ENCODE measurements at regions of chr1 and their contacts with region 1.

Region 1: DNA sequence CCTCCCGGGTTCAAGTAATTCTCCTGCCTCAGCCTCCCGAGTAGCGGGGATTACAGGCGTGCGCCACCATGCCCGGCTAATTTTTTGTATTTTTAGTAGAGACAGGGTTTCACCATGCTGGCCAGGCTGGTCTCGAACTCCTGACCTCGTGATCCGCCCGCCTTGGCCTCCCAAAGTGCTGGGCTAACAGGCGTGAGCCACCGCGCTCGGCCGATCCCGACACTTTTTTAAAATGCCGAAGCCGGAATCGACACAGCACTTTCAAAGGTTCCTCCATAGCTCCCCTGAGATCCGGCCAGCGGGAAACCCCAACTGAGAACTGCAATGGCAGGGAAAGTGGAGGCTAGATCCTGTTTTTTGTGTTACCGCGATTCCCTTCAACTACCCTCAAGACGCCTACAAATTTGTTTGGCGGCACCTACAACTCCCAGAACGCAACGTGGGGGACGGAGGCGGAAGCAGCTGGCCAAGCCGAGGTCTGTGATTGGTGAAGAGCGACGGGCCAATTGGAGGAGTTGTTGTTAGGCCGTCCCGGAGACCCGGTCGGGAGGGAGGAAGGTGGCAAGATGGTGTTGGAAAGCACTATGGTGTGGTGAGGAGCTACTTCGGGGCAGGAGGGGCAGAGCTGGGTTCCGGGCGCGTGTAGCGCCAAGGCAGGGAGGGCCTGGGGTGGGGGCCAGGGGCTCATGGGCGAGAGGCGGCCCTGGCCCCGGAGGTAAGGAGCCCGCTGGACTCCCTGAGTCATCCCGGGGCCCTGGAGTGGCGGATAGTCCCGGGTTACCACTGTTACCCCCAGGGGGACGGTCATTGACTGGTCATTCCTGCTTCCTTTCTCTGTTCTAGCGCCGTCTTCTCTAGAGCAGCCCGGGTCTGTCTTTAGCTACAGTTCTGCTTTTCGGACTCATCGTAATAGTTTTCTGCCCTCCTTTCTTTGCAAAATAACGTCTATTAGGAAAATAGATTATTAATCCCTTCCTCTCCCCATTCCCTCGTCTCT is at the start of gene PSMD4:
- DNase-seq: peak; percentile 81
- H3K4me3 ChIP-seq: peak within 1 kb of the TSS; percentile 80
- CTCF ChIP-seq: peak; percentile 7

Region 2: GRCh38 chr1:151196292-151196800 is 58.2 kb before region 1 on chr1:
- CTCF ChIA-PET with region 1: interaction called, 45 read pairs
- POLR2A ChIA-PET with region 1: no interaction called
- DNase-seq: no peak
- H3K4me3 ChIP-seq: peak overlapping the region; percentile 23; the same call in 1 of the 2 replicates
- CTCF ChIP-seq: peak; percentile 44

Region 3: GRCh38 chr1:151210830-151211229 is 43.7 kb before region 1 on chr1:
- CTCF ChIA-PET with region 1: interaction called, 16 read pairs
- POLR2A ChIA-PET with region 1: no interaction called
- DNase-seq: no peak
- H3K4me3 ChIP-seq: no peak overlapping the region
- CTCF ChIP-seq: no peak

Region 4: DNA sequence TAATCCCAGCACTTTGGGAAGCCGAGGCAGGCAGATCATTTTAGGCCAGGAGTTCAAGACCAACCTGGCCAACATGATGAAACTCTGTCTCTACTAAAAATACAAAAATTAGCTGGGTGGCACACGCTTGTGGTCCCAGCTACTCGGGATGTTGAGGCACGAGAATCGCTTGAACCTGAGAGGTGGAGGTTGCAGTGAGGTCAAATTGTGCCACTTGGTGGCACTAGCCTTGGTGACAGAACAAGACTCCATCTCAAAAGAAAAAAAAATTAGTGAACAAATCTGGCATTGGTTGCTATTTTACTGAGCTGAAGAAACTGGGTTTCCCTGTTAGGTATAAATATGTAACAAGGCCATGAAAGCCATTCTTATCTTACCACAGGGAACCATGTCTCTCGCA is 26.9 kb before region 1 on chr1:
- CTCF ChIA-PET with region 1: interaction called, 10 read pairs
- POLR2A ChIA-PET with region 1: interaction called, 4 read pairs
- DNase-seq: no peak
- H3K4me3 ChIP-seq: no peak overlapping the region
- CTCF ChIP-seq: no peak

Region 5: GRCh38 chr1:151238467-151238739 is 16.1 kb before region 1 on chr1:
- CTCF ChIA-PET with region 1: interaction called, 69 read pairs
- POLR2A ChIA-PET with region 1: no interaction called
- DNase-seq: peak; percentile 63
- H3K4me3 ChIP-seq: no peak overlapping the region
- CTCF ChIP-seq: no peak

Region 6: GRCh38 chr1:151267760-151268159 is 13.2 kb after region 1 on chr1:
- CTCF ChIA-PET with region 1: interaction called, 19 read pairs
- POLR2A ChIA-PET with region 1: interaction called, 6 read pairs
- DNase-seq: no peak
- H3K4me3 ChIP-seq: no peak overlapping the region
- CTCF ChIP-seq: no peak

Measured in AG04449 (cell line).